ENCODE measurements at regions of chr17 and their contacts with region 1.

Region 1: DNA sequence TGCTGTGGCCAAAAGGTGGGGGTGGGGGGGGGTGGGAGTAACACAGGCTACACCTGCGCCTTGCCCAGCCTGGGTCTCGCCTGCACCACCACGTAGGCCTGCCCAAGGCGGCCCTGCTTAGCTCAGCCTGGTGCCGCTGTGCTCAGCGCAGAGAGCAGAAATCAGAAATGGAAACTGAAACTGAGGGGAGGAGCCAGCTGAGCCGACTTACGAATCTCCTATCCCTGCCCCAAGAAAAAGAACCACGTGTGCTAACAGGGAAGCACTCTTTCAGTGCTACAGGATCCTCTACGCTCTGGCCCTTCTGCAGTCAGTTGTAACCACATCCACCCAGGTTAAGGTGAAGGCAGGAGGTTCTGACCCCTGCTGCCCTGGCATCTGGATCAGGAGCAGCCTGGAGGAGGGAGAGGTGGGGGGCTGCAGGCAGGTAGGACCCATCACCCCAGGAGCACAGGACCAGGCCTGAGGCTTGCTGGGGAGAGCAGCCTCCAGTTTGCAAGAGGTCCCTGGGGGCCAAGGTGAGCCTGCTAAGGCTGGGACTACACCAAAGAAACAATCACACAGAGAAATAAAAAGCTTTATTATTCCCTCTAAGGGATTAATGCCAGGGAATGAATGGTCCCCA is at the start of gene DHX58:
- DNase-seq: peak; percentile 36
- H3K4me3 ChIP-seq: peak within 1 kb of the TSS; percentile 55
- CTCF ChIP-seq: no peak

Region 2: GRCh38 chr17:42039794-42040763 is 72.6 kb before region 1 on chr17:
- CTCF ChIA-PET with region 1: no interaction called
- POLR2A ChIA-PET with region 1: no interaction called
- DNase-seq: no peak
- H3K4me3 ChIP-seq: no peak overlapping the region
- CTCF ChIP-seq: no peak

Region 3: GRCh38 chr17:42101513-42102319 is 10.9 kb before region 1 on chr17:
- CTCF ChIA-PET with region 1: interaction called, 52 read pairs
- POLR2A ChIA-PET with region 1: no interaction called
- DNase-seq: no peak
- H3K4me3 ChIP-seq: no peak overlapping the region
- CTCF ChIP-seq: peak; percentile 77

Region 4: GRCh38 chr17:42129109-42129837 is 16.6 kb after region 1 on chr17:
- CTCF ChIA-PET with region 1: interaction called, 23 read pairs
- POLR2A ChIA-PET with region 1: no interaction called
- DNase-seq: no peak
- H3K4me3 ChIP-seq: no peak overlapping the region
- CTCF ChIP-seq: no peak